ENCODE measurements at regions of chr5 and their contacts with region 1.

Region 1: GRCh38 chr5:177607452-177608192 is 7.7 kb downstream of the B4GALT7 start:
- DNase-seq: peak; percentile 76
- ATAC-seq: peak; percentile 98
- H3K4me3 ChIP-seq: no peak overlapping the region
- H3K27ac ChIP-seq: no peak overlapping the region
- H3K4me1 ChIP-seq: no peaks in the 10 kb centered on the region
- H3K27me3 ChIP-seq: no peaks in the 10 kb centered on the region
- CTCF ChIP-seq: peak; percentile 85
- POLR2A ChIP-seq: no peak
- RAD21 ChIP-seq: peak; percentile 76

Region 2: GRCh38 chr5:177116631-177117373 is 490.8 kb before region 1 on chr5:
- CTCF ChIA-PET with region 1: no interaction called
- POLR2A ChIA-PET with region 1: no interaction called
- dilution Hi-C with region 1: no loop called
- in situ Hi-C with region 1: no loop called
- intact Hi-C with region 1: no loop called
- DNase-seq: peak; percentile 53
- ATAC-seq: peak; percentile 72
- H3K4me3 ChIP-seq: no peak overlapping the region
- H3K27ac ChIP-seq: no peak overlapping the region
- H3K4me1 ChIP-seq: no peaks in the 10 kb centered on the region; the same call in 1 of the 2 replicates
- H3K27me3 ChIP-seq: no peaks in the 10 kb centered on the region
- CTCF ChIP-seq: no peak
- POLR2A ChIP-seq: no peak
- RAD21 ChIP-seq: no peak

Region 3: DNA sequence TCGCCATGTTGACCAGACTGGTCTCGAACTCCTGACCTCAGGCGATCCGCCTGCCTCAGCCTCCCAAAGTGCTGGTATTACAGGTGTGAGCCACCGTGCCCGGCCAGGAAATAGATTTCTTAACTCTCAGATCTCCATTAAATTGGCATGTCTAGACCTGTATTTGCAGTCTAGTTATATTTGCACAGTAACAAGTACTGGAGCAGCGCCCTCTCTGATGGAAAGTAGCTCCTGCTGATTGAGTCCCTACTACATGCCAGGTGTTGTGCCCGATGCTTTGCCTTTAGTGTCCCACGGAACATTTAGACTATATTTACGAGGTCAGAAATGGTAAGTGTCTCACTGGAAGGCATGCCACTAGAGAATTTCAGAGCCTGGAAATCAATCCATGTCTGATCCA is 31.5 kb before region 1 on chr5:
- CTCF ChIA-PET with region 1: no interaction called
- POLR2A ChIA-PET with region 1: no interaction called
- dilution Hi-C with region 1: no loop called
- in situ Hi-C with region 1: no loop called
- intact Hi-C with region 1: no loop called
- DNase-seq: no peak
- ATAC-seq: no peak
- H3K4me3 ChIP-seq: no peak overlapping the region
- H3K27ac ChIP-seq: no peak overlapping the region
- H3K4me1 ChIP-seq: no peaks in the 10 kb centered on the region
- H3K27me3 ChIP-seq: peaks cover 13% of the 10 kb centered on the region
- CTCF ChIP-seq: no peak
- POLR2A ChIP-seq: no peak
- RAD21 ChIP-seq: no peak

Region 4: GRCh38 chr5:178063277-178063676 is 455.7 kb after region 1 on chr5:
- CTCF ChIA-PET with region 1: no interaction called
- POLR2A ChIA-PET with region 1: no interaction called
- dilution Hi-C with region 1: no loop called
- in situ Hi-C with region 1: loop called (anchors 25 kb)
- intact Hi-C with region 1: loop called (anchors 2 kb)
- DNase-seq: no peak
- ATAC-seq: no peak
- H3K4me3 ChIP-seq: no peak overlapping the region
- H3K27ac ChIP-seq: no peak overlapping the region
- H3K4me1 ChIP-seq: no peaks in the 10 kb centered on the region
- H3K27me3 ChIP-seq: peaks cover 11% of the 10 kb centered on the region
- CTCF ChIP-seq: no peak
- POLR2A ChIP-seq: no peak
- RAD21 ChIP-seq: no peak

Region 5: GRCh38 chr5:178069909-178070308 is 462.3 kb after region 1 on chr5:
- CTCF ChIA-PET with region 1: no interaction called
- POLR2A ChIA-PET with region 1: no interaction called
- dilution Hi-C with region 1: no loop called
- in situ Hi-C with region 1: loop called (anchors 25 kb)
- intact Hi-C with region 1: loop called (anchors 1 kb)
- DNase-seq: peak; percentile 26
- ATAC-seq: peak; percentile 76
- H3K4me3 ChIP-seq: no peak overlapping the region
- H3K27ac ChIP-seq: no peak overlapping the region
- H3K4me1 ChIP-seq: no peaks in the 10 kb centered on the region
- H3K27me3 ChIP-seq: peaks cover 37% of the 10 kb centered on the region
- CTCF ChIP-seq: peak; percentile 42
- POLR2A ChIP-seq: no peak
- RAD21 ChIP-seq: peak; percentile 46

Measured in IMR-90 (cell line).